Activated CD4-positive, alpha-beta memory T cell treated with anti-CD3 and anti-CD28 coated beads for 36 hours (primary cell): ENCODE measurements at regions of chr17 and their contacts with region 1.

Region 1: DNA sequence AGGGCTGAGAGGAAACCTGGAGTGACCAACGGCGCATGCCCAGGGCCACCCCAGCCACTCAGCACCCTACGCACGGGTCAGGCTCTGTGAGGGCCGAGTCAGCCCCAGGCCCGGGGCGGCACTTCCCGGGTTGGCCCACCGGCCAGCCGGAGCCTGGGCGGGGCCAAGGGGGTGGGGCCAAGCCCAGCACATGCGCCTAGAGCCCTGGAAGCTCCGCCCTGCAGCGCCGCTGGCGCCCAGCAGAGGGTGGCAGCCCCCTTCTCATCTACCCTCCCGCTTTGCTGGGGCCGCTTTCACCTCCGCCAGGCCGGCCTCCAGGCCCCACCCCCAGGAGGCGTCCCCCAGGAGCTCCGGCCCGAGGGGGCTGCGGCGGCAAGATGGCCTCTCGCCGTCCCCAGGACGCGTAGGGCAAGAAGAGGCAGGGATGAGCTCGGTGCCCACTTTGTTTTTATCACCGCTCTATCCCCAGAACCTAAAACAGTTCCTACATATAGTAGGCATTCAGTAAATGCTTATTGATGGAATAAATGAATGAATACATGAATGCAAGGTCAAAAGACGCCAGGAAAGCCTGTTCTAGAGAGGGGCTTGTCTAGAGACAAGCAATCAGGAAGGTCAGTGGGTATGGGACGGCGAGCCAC is 31.3 kb downstream of the MYO18A start:
- DNase-seq: peak; percentile 96
- H3K4me3 Mint-ChIP-seq: peak overlapping the region; percentile 70
- H3K27ac Mint-ChIP-seq: peak overlapping the region; percentile 75
- H3K4me1 Mint-ChIP-seq: peaks cover 46% of the 10 kb centered on the region
- H3K27me3 Mint-ChIP-seq: no peaks in the 10 kb centered on the region

Region 2: DNA sequence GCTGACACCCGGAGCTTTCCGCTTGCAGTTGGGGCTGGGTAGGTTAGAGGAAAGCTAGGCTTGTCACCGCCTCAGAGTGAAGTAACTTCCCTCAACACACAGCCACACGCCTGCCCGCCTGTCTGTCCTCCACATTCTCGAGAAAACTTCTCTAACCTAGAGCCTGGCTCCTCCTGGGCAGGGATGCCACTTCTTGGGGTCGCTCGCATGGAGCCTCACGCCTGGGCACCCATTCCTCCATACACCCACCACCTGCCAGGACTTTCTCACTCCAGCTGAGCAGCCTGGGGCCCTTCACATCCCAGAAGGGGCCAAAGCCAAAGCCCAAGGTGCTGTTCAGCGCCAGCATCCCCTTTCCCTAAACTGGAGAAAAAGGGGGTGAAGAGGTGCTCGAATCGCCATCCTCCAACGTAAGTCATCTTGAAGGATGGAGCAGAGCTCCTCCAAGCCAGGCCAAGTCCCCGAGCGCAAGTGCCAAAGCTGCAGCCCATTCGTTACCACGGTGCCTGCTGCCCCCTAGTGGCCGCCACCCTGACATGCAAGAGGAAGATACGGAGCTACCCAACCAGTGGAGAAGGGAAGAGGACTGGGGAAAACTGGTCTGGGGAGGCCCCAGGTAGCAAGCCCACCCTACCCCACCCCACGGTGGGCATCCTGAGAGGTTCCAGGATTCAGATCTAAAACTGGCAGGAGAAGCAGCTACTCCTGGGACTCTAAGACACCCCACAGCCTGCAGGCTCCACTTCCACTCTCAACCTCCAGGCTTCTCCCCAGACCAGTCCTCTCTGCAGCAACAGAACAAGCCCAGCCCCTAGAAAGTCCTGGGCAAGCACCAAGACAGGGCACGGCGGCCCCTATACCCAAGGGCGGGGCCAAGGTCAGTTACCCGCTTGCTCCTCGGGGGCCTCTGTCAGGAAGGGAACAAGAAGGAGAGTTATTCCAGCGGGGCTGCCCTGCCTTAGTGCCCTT is 31.8 kb before region 1 on chr17:
- CTCF ChIA-PET with region 1: interaction called, 64 read pairs
- POLR2A ChIA-PET with region 1: no interaction called
- intact Hi-C with region 1: no loop called
- DNase-seq: peak; percentile 87
- H3K4me3 Mint-ChIP-seq: no peak overlapping the region
- H3K27ac Mint-ChIP-seq: no peak overlapping the region
- H3K4me1 Mint-ChIP-seq: peaks cover 4% of the 10 kb centered on the region
- H3K27me3 Mint-ChIP-seq: no peaks in the 10 kb centered on the region

Region 3: DNA sequence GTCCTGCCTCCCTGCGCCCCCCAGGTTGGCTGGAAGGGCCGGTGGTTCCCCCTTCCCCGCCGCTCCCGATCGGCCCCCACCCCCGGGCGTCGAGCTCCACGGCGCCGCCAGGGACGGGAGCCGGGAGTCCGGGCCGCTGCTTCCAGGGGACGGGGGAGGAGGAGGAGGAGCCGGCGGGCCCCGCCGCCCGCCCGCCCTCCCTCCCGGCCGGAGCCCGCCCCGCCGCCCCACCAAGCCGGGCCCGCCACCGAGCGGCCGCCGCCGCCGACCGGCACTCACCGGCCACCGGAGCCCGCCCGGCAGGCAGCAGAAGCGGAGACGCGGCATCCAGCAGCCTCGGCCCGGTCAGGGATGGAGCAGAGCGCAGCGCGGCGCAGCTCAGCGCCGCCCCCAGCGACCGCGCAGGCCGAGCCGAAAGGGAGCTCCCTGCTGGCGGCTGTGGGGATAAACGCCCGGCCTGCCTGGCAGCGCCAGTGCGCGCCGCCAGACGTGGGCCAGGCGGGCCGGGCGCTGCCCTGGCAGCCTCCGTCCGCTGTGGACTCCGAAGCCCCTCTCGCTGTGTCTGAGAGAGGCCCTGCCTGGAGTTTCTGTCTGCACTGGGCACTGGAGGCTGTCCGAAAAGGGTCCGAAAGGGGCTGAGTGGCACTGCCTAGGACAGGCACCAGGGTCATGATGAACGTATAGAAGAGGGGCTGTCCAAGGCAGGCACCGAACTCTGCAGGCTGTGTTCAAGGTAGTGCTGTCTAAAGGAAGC is 31.3 kb after region 1 on chr17 and contains the start of gene MYO18A:
- CTCF ChIA-PET with region 1: interaction called, 308 read pairs
- POLR2A ChIA-PET with region 1: interaction called, 12 read pairs
- intact Hi-C with region 1: loop called (anchors 1 kb)
- DNase-seq: peak; percentile 86
- H3K4me3 Mint-ChIP-seq: peak within 1 kb of the TSS; percentile 56
- H3K27ac Mint-ChIP-seq: no peak within 1 kb of the TSS
- H3K4me1 Mint-ChIP-seq: peaks cover 36% of the 10 kb centered on the region
- H3K27me3 Mint-ChIP-seq: peaks cover 2% of the 10 kb centered on the region
- total RNA-seq, gene MYO18A: 46.3 to 47.1 TPM

Region 4: DNA sequence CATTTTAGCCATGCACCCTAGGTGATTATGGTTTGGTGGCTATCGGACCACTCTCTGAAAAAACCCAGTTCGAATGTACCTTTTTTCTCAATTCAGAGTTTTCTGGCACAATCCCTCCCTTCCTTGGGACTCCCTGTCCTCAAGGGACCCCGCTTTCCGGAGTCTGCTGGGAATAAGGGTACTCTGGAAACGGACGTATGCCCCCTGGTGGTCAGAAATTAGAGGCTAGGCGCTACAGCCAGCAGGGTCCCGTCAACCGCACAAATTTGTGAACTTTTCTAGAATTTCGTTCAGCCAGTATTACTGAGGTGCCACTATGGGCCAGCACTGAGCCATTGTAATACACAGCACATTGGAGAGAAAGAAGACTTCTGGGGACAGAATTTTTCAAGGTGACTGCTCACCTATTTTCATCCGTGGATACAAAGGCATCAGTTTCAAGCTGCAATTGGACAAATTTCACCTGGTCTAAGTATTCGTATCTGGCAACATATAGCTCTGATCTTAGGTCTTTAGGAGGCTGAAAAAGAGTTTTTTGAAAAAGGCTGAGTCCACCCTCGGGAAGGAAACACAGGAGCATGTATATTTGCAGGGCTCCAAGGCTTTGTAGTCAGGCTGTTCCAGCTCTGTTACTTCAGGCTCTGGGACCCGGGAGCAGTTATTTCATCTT is 70.6 kb after region 1 on chr17:
- CTCF ChIA-PET with region 1: interaction called, 247 read pairs
- POLR2A ChIA-PET with region 1: no interaction called
- intact Hi-C with region 1: loop called (anchors 1 kb)
- DNase-seq: peak; percentile 80
- H3K4me3 Mint-ChIP-seq: no peak overlapping the region
- H3K27ac Mint-ChIP-seq: no peak overlapping the region
- H3K4me1 Mint-ChIP-seq: no peaks in the 10 kb centered on the region
- H3K27me3 Mint-ChIP-seq: no peaks in the 10 kb centered on the region

Region 5: GRCh38 chr17:29293890-29294579 is 145.1 kb after region 1 on chr17 and contains the start of gene NUFIP2:
- CTCF ChIA-PET with region 1: interaction called, 34 read pairs
- POLR2A ChIA-PET with region 1: interaction called, 4 read pairs
- intact Hi-C with region 1: loop called (anchors 2 kb)
- DNase-seq: peak; percentile 99
- H3K4me3 Mint-ChIP-seq: peak within 1 kb of the TSS; percentile 99
- H3K27ac Mint-ChIP-seq: peak within 1 kb of the TSS; percentile 96
- H3K4me1 Mint-ChIP-seq: peaks cover 31% of the 10 kb centered on the region
- H3K27me3 Mint-ChIP-seq: no peaks in the 10 kb centered on the region
- total RNA-seq, gene NUFIP2: 45.6 to 56.9 TPM

Region 6: DNA sequence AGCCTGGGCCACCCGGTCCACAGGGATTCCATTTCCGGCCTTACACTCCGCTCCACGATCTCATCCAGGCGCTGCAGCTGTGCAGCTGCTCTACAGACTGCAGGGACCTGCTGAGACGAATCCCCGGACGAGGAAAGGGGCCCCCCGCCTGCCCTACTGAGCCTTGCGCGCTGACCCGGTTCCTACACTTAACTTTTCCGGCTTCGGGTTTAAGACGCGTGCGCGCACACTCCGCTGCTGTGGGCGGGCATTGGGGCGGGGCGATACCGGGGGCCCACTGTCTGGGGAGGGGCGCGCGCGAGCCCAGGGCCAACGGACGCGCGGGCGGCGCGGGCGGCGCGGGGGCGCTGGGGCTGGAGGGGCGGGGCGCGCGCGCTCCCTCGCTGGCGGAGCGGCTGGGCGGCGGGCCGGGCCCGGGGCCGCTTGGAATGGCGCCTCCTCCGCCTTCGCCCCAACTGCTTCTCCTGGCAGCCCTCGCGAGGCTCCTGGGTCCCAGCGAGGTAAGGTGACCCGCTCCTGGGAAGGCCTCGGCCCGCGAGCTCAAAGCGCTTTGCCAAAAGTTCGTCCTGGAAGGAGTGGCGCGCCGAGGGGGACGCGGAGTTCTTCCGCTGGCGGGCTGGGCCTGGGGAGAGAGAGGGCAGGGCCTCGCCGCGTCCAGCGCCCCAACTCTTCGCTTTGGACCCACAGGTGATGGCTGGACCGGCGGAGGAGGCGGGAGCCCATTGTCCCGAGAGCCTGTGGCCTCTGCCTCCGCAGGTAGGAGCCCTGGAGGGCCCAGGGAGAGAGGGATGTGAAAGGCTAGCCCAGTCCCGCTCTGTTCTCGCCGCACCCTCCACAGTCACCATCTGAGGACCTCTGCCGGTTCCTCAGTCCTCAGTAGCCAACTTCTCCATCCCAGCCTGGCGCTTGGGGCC is 419.7 kb after region 1 on chr17 and contains the start of gene TP53I13:
- CTCF ChIA-PET with region 1: no interaction called
- POLR2A ChIA-PET with region 1: no interaction called
- intact Hi-C with region 1: loop called (anchors 10 kb)
- DNase-seq: peak; percentile 93
- H3K4me3 Mint-ChIP-seq: peak within 1 kb of the TSS; percentile 86
- H3K27ac Mint-ChIP-seq: peak within 1 kb of the TSS; percentile 94
- H3K4me1 Mint-ChIP-seq: peaks cover 38% of the 10 kb centered on the region
- H3K27me3 Mint-ChIP-seq: no peaks in the 10 kb centered on the region
- total RNA-seq, gene TP53I13: 54.2 to 55.3 TPM